Heart left ventricle (tissue), 16 donors: ENCODE measurements at regions of chr17 and their contacts with region 1.

Region 1: GRCh38 chr17:57653995-57654775 is 90.9 kb downstream of the CCDC182 start:
- DNase-seq: no peak
- ATAC-seq: no peak
- H3K4me3 ChIP-seq: no peak overlapping the region
- H3K27ac ChIP-seq: no peak overlapping the region
- H3K4me1 ChIP-seq: no peaks in the 10 kb centered on the region
- H3K27me3 ChIP-seq: no peaks in the 10 kb centered on the region
- CTCF ChIP-seq: no peak
- POLR2A ChIP-seq: no peak

Region 2: DNA sequence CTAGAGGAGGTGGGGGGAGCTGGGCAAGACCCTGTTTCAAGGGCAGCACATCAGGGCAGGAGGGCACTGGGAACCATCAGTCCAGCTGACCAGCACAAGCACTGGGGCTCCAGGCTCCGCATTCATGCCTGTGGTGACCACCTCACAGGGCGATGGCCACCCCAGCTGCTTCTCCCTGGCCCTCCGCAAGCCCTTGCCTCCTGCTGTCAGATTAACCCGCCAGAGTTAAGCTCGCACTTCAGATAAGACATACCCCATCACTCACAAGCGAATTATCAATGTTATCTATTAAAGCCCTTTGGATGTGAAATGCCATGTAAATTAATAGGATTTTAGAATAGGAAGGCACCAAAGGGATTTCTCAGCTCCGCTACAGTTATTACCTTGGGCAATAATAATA is 14.1 kb before region 1 on chr17:
- intact Hi-C with region 1: loop called in 1 of 10 experiments (anchors 2 kb)
- DNase-seq: no peak
- ATAC-seq: no peak
- H3K4me3 ChIP-seq: no peak overlapping the region
- H3K27ac ChIP-seq: no peak overlapping the region
- H3K4me1 ChIP-seq: no peaks in the 10 kb centered on the region
- H3K27me3 ChIP-seq: no peaks in the 10 kb centered on the region
- CTCF ChIP-seq: no peak
- POLR2A ChIP-seq: no peak